ENCODE measurements at regions of chr2 and their contacts with region 1.

Region 1: DNA sequence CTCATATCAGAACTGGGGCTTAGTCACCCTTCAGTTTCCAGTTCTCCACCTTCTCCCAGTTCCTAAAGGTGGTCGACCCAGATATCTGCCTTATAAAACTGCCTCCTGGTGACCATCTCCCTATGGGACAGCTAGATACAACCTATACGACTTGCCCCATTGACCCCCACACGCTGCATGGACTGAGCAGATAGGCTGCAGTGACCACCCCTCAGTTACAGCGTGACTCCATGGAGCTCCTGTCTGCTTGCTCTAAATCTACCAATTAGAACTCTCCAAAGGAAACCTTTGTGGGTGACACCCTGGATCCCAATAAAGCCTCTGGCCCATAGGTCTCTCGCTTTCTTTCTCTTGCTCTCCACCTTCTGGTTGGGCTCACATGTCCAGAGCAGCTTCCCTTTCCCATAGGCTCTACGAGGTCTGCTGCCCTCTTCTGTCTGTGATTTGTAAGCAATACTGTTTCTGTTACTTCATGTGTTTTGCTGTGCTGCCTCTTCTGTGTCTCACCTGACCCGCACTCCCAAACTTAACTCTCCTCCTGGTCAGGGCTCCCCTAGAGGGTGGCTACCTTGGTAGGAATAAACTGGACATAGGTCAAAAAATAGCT is 971.3 kb upstream of the FAM98A start:
- DNase-seq: peak; percentile 35
- H3K4me3 Mint-ChIP-seq: no peak overlapping the region
- H3K27ac Mint-ChIP-seq: no peak overlapping the region
- H3K4me1 Mint-ChIP-seq: peaks cover 4% of the 10 kb centered on the region
- H3K27me3 Mint-ChIP-seq: no peaks in the 10 kb centered on the region
- CTCF ChIP-seq: peak; percentile 65

Region 2: GRCh38 chr2:33673937-33674336 is 896.4 kb before region 1 on chr2:
- CTCF ChIA-PET with region 1: interaction called, 36 read pairs
- POLR2A ChIA-PET with region 1: no interaction called
- intact Hi-C with region 1: no loop called
- DNase-seq: peak; percentile 18
- H3K4me3 Mint-ChIP-seq: no peak overlapping the region
- H3K27ac Mint-ChIP-seq: no peak overlapping the region
- H3K4me1 Mint-ChIP-seq: no peaks in the 10 kb centered on the region
- H3K27me3 Mint-ChIP-seq: no peaks in the 10 kb centered on the region
- CTCF ChIP-seq: peak; percentile 40

Region 3: DNA sequence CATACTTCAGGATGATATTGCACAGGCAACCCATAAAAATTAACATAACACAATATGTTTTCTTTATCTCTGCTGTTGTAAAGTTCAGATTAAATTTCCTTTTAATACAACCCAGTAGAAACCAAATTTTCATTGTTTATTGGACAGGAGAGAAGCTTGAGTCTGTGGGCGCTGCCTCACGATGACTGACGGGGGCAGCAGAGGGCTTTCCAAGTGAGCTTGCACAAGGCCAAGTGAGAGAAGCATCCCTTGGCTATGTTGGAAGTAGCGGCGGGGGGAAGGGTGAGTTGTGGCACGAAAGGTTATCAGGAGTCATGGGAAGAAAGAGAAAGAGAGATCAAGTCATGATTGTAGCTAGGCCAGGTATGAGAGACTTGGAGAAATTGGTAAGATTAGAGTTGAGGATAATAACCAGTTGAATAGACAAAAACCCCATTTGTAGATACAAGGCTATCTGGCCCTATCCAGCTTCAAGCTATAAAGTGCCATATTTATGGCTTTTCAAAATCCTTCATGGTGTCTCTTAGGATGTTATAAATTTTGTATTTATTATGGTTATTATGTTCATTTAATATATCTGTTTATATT is 557.6 kb before region 1 on chr2:
- CTCF ChIA-PET with region 1: interaction called, 15 read pairs
- POLR2A ChIA-PET with region 1: no interaction called
- intact Hi-C with region 1: loop called (anchors 2 kb)
- DNase-seq: peak; percentile 66
- H3K4me3 Mint-ChIP-seq: no peak overlapping the region
- H3K27ac Mint-ChIP-seq: peak overlapping the region; percentile 3
- H3K4me1 Mint-ChIP-seq: peaks cover 6% of the 10 kb centered on the region
- H3K27me3 Mint-ChIP-seq: no peaks in the 10 kb centered on the region
- CTCF ChIP-seq: peak; percentile 80

Region 4: DNA sequence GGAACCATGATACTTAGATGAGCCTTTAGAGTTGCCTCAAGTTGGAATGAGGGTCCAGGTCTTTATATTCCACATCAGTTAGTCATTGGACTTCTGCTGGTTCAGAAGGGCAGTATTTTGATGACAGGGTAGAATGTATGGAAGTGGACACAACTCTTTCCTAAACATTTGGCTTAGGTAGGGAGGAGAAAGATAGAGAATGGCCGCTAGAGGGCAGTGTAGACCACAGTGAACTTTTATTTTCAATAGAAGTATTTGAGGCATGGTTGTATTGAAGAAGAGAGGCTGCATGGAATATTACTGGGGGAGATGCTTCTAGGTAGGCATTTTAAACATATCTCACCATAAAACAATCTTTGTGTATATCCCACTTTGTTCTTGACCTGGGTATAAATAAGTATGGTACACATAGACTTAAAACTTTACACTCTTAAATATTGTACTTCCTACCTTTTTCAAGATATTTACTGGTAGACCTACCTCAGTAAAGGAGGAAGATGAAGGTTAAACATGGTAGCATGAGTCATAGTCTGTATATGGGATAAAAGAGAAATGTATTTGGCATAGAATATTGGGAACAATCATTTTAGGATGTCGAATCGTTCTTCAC is 473.7 kb before region 1 on chr2:
- CTCF ChIA-PET with region 1: interaction called, 127 read pairs
- POLR2A ChIA-PET with region 1: no interaction called
- intact Hi-C with region 1: loop called (anchors 2 kb)
- DNase-seq: peak; percentile 75
- H3K4me3 Mint-ChIP-seq: no peak overlapping the region
- H3K27ac Mint-ChIP-seq: no peak overlapping the region
- H3K4me1 Mint-ChIP-seq: peaks cover 5% of the 10 kb centered on the region
- H3K27me3 Mint-ChIP-seq: no peaks in the 10 kb centered on the region
- CTCF ChIP-seq: peak; percentile 71

Region 5: GRCh38 chr2:34121076-34121475 is 449.3 kb before region 1 on chr2:
- CTCF ChIA-PET with region 1: interaction called, 16 read pairs
- POLR2A ChIA-PET with region 1: no interaction called
- intact Hi-C with region 1: no loop called
- DNase-seq: no peak
- H3K4me3 Mint-ChIP-seq: no peak overlapping the region
- H3K27ac Mint-ChIP-seq: no peak overlapping the region
- H3K4me1 Mint-ChIP-seq: no peaks in the 10 kb centered on the region
- H3K27me3 Mint-ChIP-seq: no peaks in the 10 kb centered on the region
- CTCF ChIP-seq: no peak

Region 6: GRCh38 chr2:34627003-34627402 is 56.6 kb after region 1 on chr2:
- CTCF ChIA-PET with region 1: interaction called, 10 read pairs
- POLR2A ChIA-PET with region 1: no interaction called
- intact Hi-C with region 1: no loop called
- DNase-seq: peak; percentile 0
- H3K4me3 Mint-ChIP-seq: no peak overlapping the region
- H3K27ac Mint-ChIP-seq: no peak overlapping the region
- H3K4me1 Mint-ChIP-seq: no peaks in the 10 kb centered on the region
- H3K27me3 Mint-ChIP-seq: no peaks in the 10 kb centered on the region
- CTCF ChIP-seq: no peak

Region 7: GRCh38 chr2:36486546-36487044 is 1916.2 kb after region 1 on chr2:
- CTCF ChIA-PET with region 1: no interaction called
- POLR2A ChIA-PET with region 1: no interaction called
- intact Hi-C with region 1: no loop called
- DNase-seq: peak; percentile 50
- H3K4me3 Mint-ChIP-seq: peak overlapping the region; percentile 20
- H3K27ac Mint-ChIP-seq: peak overlapping the region; percentile 61
- H3K4me1 Mint-ChIP-seq: peaks cover 51% of the 10 kb centered on the region
- H3K27me3 Mint-ChIP-seq: no peaks in the 10 kb centered on the region
- CTCF ChIP-seq: no peak

Measured in MCF 10A (cell line).